ENCODE measurements at regions of chr9 and their contacts with region 1.

Region 1: GRCh38 chr9:10268531-10269485 is 344.0 kb downstream of the PTPRD start:
- DNase-seq: peak in 1 of 3 donors; percentile 35
- ATAC-seq: peak in 1 of 2 donors; percentile 29
- H3K4me3 ChIP-seq: no peak overlapping the region
- H3K27ac ChIP-seq: no peak overlapping the region
- H3K4me1 ChIP-seq: no peaks in the 10 kb centered on the region
- H3K27me3 ChIP-seq: no peaks in the 10 kb centered on the region

Region 2: DNA sequence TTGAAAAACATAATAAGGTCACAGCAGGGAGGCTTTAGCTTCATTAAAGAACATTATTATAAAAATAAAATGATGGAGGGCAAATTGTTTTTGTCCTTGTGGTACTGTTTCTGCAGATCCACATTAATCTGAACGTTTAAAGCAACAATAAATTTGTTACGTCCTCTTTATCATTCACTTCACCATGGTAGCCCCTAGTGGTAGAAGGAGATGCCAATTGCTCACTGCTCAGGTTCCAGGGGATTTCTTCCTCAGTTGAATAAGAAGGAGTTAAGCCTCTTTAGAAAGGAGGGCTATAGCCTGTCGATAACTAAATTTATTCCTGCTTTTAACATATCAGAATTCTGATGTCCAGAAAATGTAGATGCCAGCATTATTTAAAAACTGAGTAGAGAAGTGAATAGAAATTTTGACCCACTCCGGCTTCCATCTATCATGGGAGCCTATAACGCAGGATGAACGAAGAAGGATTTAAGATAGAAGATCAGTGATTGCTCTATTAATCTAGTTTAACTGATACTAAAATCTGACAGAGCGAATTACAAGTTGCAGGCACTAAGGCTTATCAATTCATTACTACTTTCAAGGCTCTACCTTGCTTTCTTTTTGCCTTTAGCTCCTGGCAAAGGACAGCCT is 348.3 kb before region 1 on chr9:
- intact Hi-C with region 1: no loop called
- DNase-seq: no peak
- ATAC-seq: no peak
- H3K4me3 ChIP-seq: no peak overlapping the region
- H3K27ac ChIP-seq: no peak overlapping the region
- H3K4me1 ChIP-seq: no peaks in the 10 kb centered on the region
- H3K27me3 ChIP-seq: no peaks in the 10 kb centered on the region

Region 3: DNA sequence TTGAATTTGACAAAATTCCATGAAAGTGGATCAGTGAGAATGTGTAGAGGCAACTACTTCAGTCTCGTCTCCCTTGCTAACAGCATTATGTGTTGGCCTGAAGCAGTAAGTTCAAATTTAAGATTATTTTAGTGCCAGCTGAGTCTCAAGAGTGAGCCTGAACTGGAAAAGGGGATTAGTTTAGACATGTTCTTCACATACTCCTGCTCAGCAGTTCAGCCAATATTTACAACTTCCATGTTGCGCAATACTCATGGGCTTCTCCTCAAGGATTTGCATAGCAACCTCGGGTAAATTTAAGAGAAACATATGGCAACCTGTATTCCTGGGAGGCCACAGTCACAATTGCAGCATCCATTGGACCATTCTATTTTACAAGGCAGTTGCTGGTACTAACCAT is 209.8 kb before region 1 on chr9:
- intact Hi-C with region 1: loop called in 2 of 4 experiments (anchors 5 kb)
- DNase-seq: no peak
- ATAC-seq: peak in 1 of 2 donors; percentile 33
- H3K4me3 ChIP-seq: no peak overlapping the region
- H3K27ac ChIP-seq: no peak overlapping the region
- H3K4me1 ChIP-seq: no peaks in the 10 kb centered on the region
- H3K27me3 ChIP-seq: no peaks in the 10 kb centered on the region

Measured in right cardiac atrium (tissue), 5 donors.